Pancreas (tissue), 10 donors: ENCODE measurements at regions of chr11 and their contacts with region 1.

Region 1: DNA sequence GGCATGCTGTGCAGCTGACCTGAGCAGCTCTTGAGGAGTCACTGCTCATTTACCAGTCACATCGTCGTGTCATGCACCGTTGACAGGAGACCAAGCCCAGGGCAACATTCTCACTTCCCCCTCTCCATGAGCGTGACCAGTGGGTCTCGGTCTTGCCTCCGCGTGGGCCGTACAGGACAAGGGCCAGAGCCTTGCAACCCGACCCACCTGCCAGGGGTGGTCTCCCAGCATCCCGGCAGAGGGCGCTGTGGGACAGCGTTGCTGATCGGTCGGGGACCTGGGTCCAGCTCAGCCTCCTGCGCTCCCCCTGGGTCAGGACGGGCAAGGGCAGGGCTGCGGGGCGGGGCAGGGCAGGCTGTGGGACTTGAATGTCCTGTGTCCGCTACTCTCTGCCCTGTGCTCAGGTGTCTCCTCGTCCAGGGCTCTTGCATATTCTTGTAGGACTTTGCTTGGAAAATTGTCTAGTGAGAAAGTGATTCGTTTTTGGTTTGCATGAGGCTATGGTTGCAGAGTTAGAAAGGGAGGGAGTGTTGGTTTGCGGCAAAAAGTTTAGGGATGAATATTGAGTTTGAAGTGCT is 16.2 kb downstream of the EIF4G2 start:
- DNase-seq: peak; percentile 80 to 99 (median 90)
- ATAC-seq: peak; percentile 90 to 99 (median 95)
- H3K4me3 ChIP-seq: no peak overlapping the region
- H3K27ac ChIP-seq: no peak overlapping the region
- H3K4me1 ChIP-seq: no peaks in the 10 kb centered on the region
- H3K27me3 ChIP-seq: no peaks in the 10 kb centered on the region
- CTCF ChIP-seq: peak; percentile 84 to 93 (median 88)

Region 2: DNA sequence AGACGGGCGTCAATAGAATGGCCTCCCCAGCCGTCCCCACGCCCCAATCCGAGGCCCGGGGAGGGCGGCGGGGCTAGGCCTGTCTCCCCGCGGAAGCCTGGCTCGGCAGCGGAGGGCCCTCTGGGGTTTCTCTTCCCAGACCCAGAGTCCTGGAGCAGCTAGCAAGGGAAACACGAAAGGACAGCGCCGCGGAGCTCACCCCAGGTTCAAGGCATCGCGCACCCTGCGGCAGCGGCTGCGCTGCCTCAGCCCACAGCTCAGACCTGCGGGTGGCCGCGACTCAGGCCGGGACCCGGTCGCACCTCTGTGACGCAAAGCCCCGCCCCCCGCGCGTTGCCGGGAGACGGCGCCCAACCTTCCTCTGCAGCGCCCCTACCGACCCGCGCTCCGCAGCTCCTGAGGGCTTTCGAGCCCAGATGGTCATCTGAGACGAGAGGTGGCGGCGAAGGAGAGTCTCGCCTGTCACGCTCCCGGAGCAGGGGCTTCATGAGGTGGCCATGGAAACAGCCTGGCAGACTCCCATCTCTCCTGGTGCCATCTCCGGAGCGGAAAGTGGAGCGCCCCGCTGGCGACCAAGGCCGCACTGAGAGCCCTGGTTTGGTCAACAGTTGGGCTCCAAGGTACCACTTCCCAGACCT is 251.4 kb before region 1 on chr11 and contains the start of gene RNF141:
- intact Hi-C with region 1: no loop called
- DNase-seq: peak; percentile 92 to 99 (median 96)
- ATAC-seq: peak; percentile 98 to 100 (median 100)
- H3K4me3 ChIP-seq: peak within 1 kb of the TSS; percentile 63 to 89 (median 80)
- H3K27ac ChIP-seq: peak within 1 kb of the TSS; percentile 78 to 89 (median 86)
- H3K4me1 ChIP-seq: peaks cover 0 to 8% (median 8%) of the 10 kb centered on the region in 3 donors
- H3K27me3 ChIP-seq: no peaks in the 10 kb centered on the region
- CTCF ChIP-seq: peak; percentile 60 to 83 (median 77)
- total RNA-seq, gene RNF141: 10.5 to 21.5 (median 17.6) TPM

Region 3: GRCh38 chr11:10933455-10934292 is 141.2 kb after region 1 on chr11:
- intact Hi-C with region 1: loop called in 1 of 3 experiments (anchors 10 kb)
- DNase-seq: peak; percentile 88 to 96 (median 92)
- ATAC-seq: peak; percentile 88 to 93 (median 92)
- H3K4me3 ChIP-seq: peak overlapping the region in 2 of 4 donors; percentile 30 to 42
- H3K27ac ChIP-seq: peak overlapping the region in 2 of 4 donors; percentile 29 to 63
- H3K4me1 ChIP-seq: peaks cover 0 to 5% (median 3%) of the 10 kb centered on the region in 3 donors
- H3K27me3 ChIP-seq: no peaks in the 10 kb centered on the region
- CTCF ChIP-seq: peak; percentile 91 to 96 (median 94)

Region 4: GRCh38 chr11:10955616-10956015 is 163.1 kb after region 1 on chr11:
- intact Hi-C with region 1: no loop called
- DNase-seq: no peak
- ATAC-seq: no peak
- H3K4me3 ChIP-seq: no peak overlapping the region
- H3K27ac ChIP-seq: no peak overlapping the region
- H3K4me1 ChIP-seq: no peaks in the 10 kb centered on the region
- H3K27me3 ChIP-seq: no peaks in the 10 kb centered on the region
- CTCF ChIP-seq: no peak

Region 5: GRCh38 chr11:11010624-11011127 is 218.2 kb after region 1 on chr11:
- intact Hi-C with region 1: loop called in 1 of 3 experiments (anchors 10 kb)
- DNase-seq: no peak
- ATAC-seq: peak in 3 of 4 donors; percentile 46 to 69 (median 67)
- H3K4me3 ChIP-seq: no peak overlapping the region
- H3K27ac ChIP-seq: no peak overlapping the region
- H3K4me1 ChIP-seq: no peaks in the 10 kb centered on the region
- H3K27me3 ChIP-seq: peaks cover 0 to 3% (median 0%) of the 10 kb centered on the region in 4 donors
- CTCF ChIP-seq: no peak

Region 6: GRCh38 chr11:11022125-11022730 is 229.7 kb after region 1 on chr11:
- intact Hi-C with region 1: loop called in 2 of 3 experiments (anchors 5 to 10 kb)
- DNase-seq: no peak
- ATAC-seq: peak in 3 of 4 donors; percentile 47 to 64 (median 52)
- H3K4me3 ChIP-seq: no peak overlapping the region
- H3K27ac ChIP-seq: no peak overlapping the region
- H3K4me1 ChIP-seq: no peaks in the 10 kb centered on the region
- H3K27me3 ChIP-seq: no peaks in the 10 kb centered on the region
- CTCF ChIP-seq: peak in 3 of 4 donors; percentile 13 to 41 (median 38)

Region 7: GRCh38 chr11:11787305-11788062 is 995.0 kb after region 1 on chr11:
- intact Hi-C with region 1: loop called in 1 of 3 experiments (anchors 10 kb)
- DNase-seq: peak; percentile 50 to 75 (median 61)
- ATAC-seq: peak; percentile 80 to 98 (median 95)
- H3K4me3 ChIP-seq: no peak overlapping the region
- H3K27ac ChIP-seq: no peak overlapping the region
- H3K4me1 ChIP-seq: no peaks in the 10 kb centered on the region
- H3K27me3 ChIP-seq: no peaks in the 10 kb centered on the region
- CTCF ChIP-seq: peak; percentile 75 to 80 (median 80)